ENCODE measurements at regions of chr14 and their contacts with region 1.

Region 1: GRCh38 chr14:64891839-64892375 is 12.2 kb upstream of the SPTB start:
- DNase-seq: no peak
- ATAC-seq: peak; percentile 93
- H3K4me3 ChIP-seq: no peak overlapping the region
- H3K27ac ChIP-seq: no peak overlapping the region
- H3K4me1 ChIP-seq: no peaks in the 10 kb centered on the region
- H3K27me3 ChIP-seq: peaks cover 9% of the 10 kb centered on the region
- CTCF ChIP-seq: peak; percentile 40; the same call in 1 of the 2 replicates

Region 2: DNA sequence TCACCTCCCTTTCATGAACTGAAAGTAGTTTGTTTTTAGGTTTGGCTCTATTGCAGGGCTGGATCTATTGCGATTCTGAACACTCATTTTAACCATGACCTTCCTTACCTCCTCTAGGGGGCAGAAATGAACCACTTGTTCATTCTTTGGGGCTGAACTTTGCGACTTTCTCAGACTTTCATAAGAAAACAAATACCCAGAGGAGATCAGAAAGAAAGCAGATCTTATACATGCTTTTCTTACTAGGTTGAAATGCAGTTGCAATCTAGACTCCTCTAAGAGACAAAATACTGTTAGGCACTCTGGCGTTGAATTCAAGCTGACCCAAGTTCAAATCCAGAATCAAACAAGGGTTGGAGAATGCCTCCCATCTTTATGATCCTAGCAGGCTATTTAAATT is 220.3 kb before region 1 on chr14:
- CTCF ChIA-PET with region 1: no interaction called
- POLR2A ChIA-PET with region 1: no interaction called
- in situ Hi-C with region 1: no loop called
- intact Hi-C with region 1: loop called (anchors 5 kb)
- DNase-seq: peak; percentile 25
- ATAC-seq: peak; percentile 77; the same call in 1 of the 2 replicates
- H3K4me3 ChIP-seq: no peak overlapping the region
- H3K27ac ChIP-seq: no peak overlapping the region
- H3K4me1 ChIP-seq: no peaks in the 10 kb centered on the region
- H3K27me3 ChIP-seq: no peaks in the 10 kb centered on the region
- CTCF ChIP-seq: no peak

Region 3: GRCh38 chr14:64823305-64823861 is 68.5 kb before region 1 on chr14:
- CTCF ChIA-PET with region 1: interaction called, 37 read pairs
- POLR2A ChIA-PET with region 1: no interaction called
- in situ Hi-C with region 1: no loop called
- intact Hi-C with region 1: loop called (anchors 5 kb)
- DNase-seq: no peak
- ATAC-seq: peak; percentile 97
- H3K4me3 ChIP-seq: peak overlapping the region in 1 of 2 experiments; percentile 20; a peak in 1 of 4 replicates
- H3K27ac ChIP-seq: no peak overlapping the region
- H3K4me1 ChIP-seq: no peaks in the 10 kb centered on the region
- H3K27me3 ChIP-seq: no peaks in the 10 kb centered on the region
- CTCF ChIP-seq: peak; percentile 84

Region 4: GRCh38 chr14:64910847-64911495 is 19.1 kb after region 1 on chr14:
- CTCF ChIA-PET with region 1: interaction called, 10 read pairs
- POLR2A ChIA-PET with region 1: no interaction called
- in situ Hi-C with region 1: no loop called
- intact Hi-C with region 1: no loop called
- DNase-seq: no peak
- ATAC-seq: no peak
- H3K4me3 ChIP-seq: no peak overlapping the region
- H3K27ac ChIP-seq: no peak overlapping the region
- H3K4me1 ChIP-seq: peaks cover 5% of the 10 kb centered on the region; the same call in 1 of the 2 replicates
- H3K27me3 ChIP-seq: no peaks in the 10 kb centered on the region
- CTCF ChIP-seq: peak; percentile 77

Region 5: GRCh38 chr14:65565948-65566347 is 674.0 kb after region 1 on chr14:
- CTCF ChIA-PET with region 1: no interaction called
- POLR2A ChIA-PET with region 1: no interaction called
- in situ Hi-C with region 1: no loop called
- intact Hi-C with region 1: no loop called
- DNase-seq: no peak
- ATAC-seq: no peak
- H3K4me3 ChIP-seq: no peak overlapping the region
- H3K27ac ChIP-seq: no peak overlapping the region
- H3K4me1 ChIP-seq: no peaks in the 10 kb centered on the region
- H3K27me3 ChIP-seq: no peaks in the 10 kb centered on the region
- CTCF ChIP-seq: no peak

Measured in Panc1 (cell line).